Activated naive CD4-positive, alpha-beta T cell treated with anti-CD3 and anti-CD28 coated beads for 36 hours (primary cell): ENCODE measurements at regions of chr16 and their contacts with region 1.

Region 1: DNA sequence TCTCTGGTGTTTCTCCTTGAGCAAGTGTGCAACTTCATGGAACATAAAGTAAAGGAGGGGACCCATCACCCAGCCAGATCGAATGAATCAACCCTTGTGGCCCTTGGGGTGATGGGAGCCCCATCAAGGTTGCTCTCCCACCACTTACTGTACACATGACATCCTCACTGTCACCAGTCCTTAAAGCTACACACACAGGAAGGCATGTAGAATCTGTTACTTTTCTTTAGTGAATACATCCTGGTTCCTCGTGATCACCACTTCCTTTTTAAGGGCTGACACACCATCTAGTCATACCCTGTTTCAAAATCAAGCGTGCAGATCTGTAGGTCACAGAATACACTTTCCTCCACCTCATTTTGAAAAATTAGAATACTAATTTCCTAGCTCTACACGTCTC is 22.6 kb upstream of the MPHOSPH6 start:
- DNase-seq: peak; percentile 64
- H3K4me3 Mint-ChIP-seq: no peak overlapping the region
- H3K27ac Mint-ChIP-seq: peak overlapping the region; percentile 70
- H3K4me1 Mint-ChIP-seq: peaks cover 21% of the 10 kb centered on the region
- H3K27me3 Mint-ChIP-seq: peaks cover 5% of the 10 kb centered on the region

Region 2: GRCh38 chr16:81798311-81799137 is 394.1 kb before region 1 on chr16:
- CTCF ChIA-PET with region 1: no interaction called
- intact Hi-C with region 1: loop called (anchors 1 kb)
- DNase-seq: peak; percentile 85
- H3K4me3 Mint-ChIP-seq: peak overlapping the region; percentile 55
- H3K27ac Mint-ChIP-seq: peak overlapping the region; percentile 90
- H3K4me1 Mint-ChIP-seq: peaks cover 25% of the 10 kb centered on the region
- H3K27me3 Mint-ChIP-seq: no peaks in the 10 kb centered on the region

Region 3: DNA sequence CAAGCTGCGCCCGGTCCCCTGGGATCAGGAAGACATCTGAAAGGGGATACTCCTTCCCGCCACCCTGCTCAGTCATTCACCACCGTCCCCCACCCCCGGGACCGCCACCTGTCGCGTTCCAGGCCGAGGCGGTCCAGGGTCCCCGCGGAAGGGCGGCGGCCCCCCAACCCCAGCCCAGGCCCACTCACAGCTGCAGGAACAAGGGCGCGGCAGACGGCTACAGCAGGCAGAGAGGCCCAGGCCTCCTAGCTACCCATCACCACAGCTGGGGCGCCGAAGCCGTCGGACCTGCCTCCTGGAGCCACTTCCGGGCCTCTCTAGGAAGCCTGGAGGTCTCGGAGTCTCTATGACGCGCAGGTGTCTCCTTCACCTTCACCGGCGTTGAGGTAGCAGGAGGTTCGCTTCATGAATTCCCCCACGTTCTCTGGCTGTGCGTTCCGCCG is 181.4 kb before region 1 on chr16 and contains the start of gene SDR42E1:
- CTCF ChIA-PET with region 1: no interaction called
- intact Hi-C with region 1: loop called (anchors 2 kb)
- DNase-seq: peak; percentile 75
- H3K4me3 Mint-ChIP-seq: peak within 1 kb of the TSS; percentile 79
- H3K27ac Mint-ChIP-seq: peak within 1 kb of the TSS; percentile 55
- H3K4me1 Mint-ChIP-seq: peaks cover 21% of the 10 kb centered on the region
- H3K27me3 Mint-ChIP-seq: peaks cover 7% of the 10 kb centered on the region
- total RNA-seq, gene SDR42E1: 4.2 to 6.5 TPM

Region 4: DNA sequence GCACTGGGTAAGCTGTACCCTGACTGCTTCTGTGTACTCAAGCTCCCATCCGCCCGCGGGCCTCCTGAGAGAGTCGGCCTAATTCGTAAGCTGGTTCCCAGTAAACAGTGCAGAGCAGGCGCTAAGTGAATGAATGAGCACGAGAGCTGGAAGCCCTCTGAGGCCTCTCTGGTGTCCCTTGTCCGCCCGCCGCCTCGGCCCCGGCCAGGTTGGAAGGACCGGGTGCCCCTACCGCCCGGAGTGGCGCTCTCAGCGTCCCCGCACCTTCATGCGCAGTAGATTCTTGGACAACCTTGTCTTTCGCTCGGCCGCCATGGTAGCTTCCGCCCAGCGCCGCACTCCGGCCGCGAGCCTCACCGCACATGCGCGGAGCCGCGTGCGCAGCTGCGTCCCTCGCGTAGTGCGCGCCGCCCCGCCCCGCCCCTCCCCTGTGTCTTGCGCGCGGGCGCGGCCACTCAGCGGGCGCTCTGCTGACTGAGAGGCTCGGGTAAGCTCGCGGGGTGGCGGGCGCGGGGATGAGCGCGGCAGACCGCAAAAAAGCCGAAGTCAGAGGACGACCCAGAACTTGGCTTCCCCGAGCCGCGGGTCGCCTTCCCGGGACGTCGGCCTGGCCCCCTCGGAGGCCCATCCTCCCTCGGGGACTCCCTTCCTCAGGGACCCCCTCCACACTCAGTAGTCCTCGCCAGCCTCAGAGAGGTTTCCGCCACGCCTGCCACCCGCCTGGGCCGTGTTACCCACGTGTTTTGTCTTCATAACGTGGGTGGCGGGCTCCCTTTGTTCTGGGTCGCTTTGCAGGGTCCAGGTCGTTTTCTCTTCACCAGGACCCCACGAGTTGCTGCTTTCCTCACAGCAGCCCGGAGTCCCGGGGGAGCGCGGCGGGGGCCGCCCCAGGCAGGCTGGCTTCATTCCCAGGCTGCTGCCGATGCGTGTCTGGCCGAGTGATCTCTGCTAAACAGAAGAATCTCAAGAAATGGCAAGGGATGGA is 22.5 kb before region 1 on chr16 and contains the start of gene MPHOSPH6:
- CTCF ChIA-PET with region 1: interaction called, 4 read pairs
- intact Hi-C with region 1: loop called (anchors 1 kb)
- DNase-seq: peak; percentile 90
- H3K4me3 Mint-ChIP-seq: peak within 1 kb of the TSS; percentile 93
- H3K27ac Mint-ChIP-seq: peak within 1 kb of the TSS; percentile 90
- H3K4me1 Mint-ChIP-seq: peaks cover 22% of the 10 kb centered on the region
- H3K27me3 Mint-ChIP-seq: peaks cover 23% of the 10 kb centered on the region
- total RNA-seq, gene MPHOSPH6: 34.8 to 36.9 TPM

Region 5: GRCh38 chr16:82653550-82654511 is 461.2 kb after region 1 on chr16:
- CTCF ChIA-PET with region 1: no interaction called
- intact Hi-C with region 1: loop called (anchors 5 kb)
- DNase-seq: peak; percentile 67
- H3K4me3 Mint-ChIP-seq: peak overlapping the region; percentile 38
- H3K27ac Mint-ChIP-seq: peak overlapping the region; percentile 88
- H3K4me1 Mint-ChIP-seq: peaks cover 66% of the 10 kb centered on the region
- H3K27me3 Mint-ChIP-seq: no peaks in the 10 kb centered on the region